Naive thymus-derived CD4-positive, alpha-beta T cell (primary cell): ENCODE measurements at regions of chr9 and their contacts with region 1.

Region 1: GRCh38 chr9:94681508-94681907 is 42.2 kb upstream of the FBP1 start:
- DNase-seq: peak; percentile 20 to 63 (median 52)
- ATAC-seq: peak; percentile 94
- H3K4me3 ChIP-seq: no peak overlapping the region
- H3K4me3 Mint-ChIP-seq: no peak overlapping the region
- H3K27ac ChIP-seq: no peak overlapping the region
- H3K27ac Mint-ChIP-seq: no peak overlapping the region
- H3K4me1 ChIP-seq: no peaks in the 10 kb centered on the region
- H3K4me1 Mint-ChIP-seq: no peaks in the 10 kb centered on the region
- H3K27me3 ChIP-seq: no peaks in the 10 kb centered on the region
- H3K27me3 Mint-ChIP-seq: peaks cover 0 to 47% (median 16%) of the 10 kb centered on the region in 5 donors

Region 2: DNA sequence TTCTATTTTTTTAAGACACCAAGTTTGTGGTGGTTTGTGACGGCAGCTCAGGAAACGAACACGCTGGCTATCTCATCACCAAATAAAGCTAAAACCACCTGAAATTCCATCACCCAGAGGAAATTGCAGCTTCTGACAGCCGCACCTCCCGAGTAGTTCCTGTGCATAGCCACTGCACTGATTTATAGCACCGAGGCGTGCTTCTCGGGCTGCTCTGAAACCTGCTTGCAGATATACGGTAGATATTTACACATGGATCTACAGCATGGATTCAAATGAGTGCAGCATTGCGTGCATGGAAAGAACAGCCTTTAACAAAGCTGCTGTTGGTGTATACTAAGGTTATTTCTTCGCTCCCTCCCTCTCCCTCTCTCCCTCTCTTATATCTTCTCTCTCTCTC is 951.3 kb before region 1 on chr9:
- CTCF ChIA-PET with region 1: no interaction called
- POLR2A ChIA-PET with region 1: no interaction called
- intact Hi-C with region 1: no loop called
- DNase-seq: no peak
- ATAC-seq: no peak
- H3K4me3 ChIP-seq: no peak overlapping the region
- H3K4me3 Mint-ChIP-seq: no peak overlapping the region
- H3K27ac ChIP-seq: no peak overlapping the region
- H3K27ac Mint-ChIP-seq: no peak overlapping the region
- H3K4me1 ChIP-seq: no peaks in the 10 kb centered on the region
- H3K4me1 Mint-ChIP-seq: no peaks in the 10 kb centered on the region
- H3K27me3 ChIP-seq: no peaks in the 10 kb centered on the region
- H3K27me3 Mint-ChIP-seq: peaks cover 3 to 54% (median 48%) of the 10 kb centered on the region in 5 donors

Region 3: DNA sequence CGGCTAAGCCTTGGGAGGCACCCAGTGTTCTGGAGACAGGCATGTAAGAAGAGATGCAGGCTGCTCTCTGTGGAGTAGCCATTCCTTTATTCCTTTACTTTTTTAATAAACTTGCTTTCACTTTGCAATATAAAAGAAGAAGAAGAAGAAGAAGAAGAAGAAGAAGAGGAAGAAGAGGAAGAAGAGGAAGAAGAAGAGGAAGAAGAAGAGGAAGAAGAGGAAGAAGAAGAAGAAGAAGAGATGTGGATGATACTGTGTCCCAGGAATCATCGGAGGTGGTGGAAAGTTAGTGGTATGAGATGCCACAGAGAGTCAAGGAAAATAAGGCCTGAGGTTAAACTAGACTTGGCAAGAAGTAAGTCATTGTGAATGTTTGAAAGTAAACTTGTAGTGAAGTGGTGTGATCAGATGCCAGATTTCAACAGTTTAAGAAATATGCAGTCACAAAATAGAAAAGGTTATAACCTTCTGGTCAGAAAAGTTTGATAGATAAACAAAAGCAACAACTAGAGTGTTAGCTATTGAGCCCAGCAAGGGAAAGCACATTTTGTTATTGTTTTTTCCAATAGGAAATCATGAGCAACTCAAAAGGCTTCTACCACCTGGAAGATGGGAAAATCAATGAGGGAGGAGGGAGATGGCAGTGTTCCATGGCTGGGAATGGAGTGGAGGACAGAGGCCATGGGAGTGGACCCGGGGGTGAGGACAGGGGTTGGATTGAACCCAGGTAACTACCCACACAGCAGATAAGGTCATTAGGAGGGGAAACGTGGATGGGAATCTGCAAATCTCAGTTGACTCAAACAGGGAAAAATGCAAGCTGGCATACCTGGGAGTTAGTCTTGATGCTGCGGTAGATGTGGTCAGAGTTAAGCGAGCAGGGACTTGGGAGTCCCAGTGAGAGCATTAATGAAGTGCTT is 61.8 kb after region 1 on chr9:
- CTCF ChIA-PET with region 1: no interaction called
- POLR2A ChIA-PET with region 1: no interaction called
- intact Hi-C with region 1: no loop called
- DNase-seq: no peak
- ATAC-seq: no peak
- H3K4me3 ChIP-seq: no peak overlapping the region
- H3K4me3 Mint-ChIP-seq: no peak overlapping the region
- H3K27ac ChIP-seq: no peak overlapping the region
- H3K27ac Mint-ChIP-seq: no peak overlapping the region
- H3K4me1 ChIP-seq: no peaks in the 10 kb centered on the region
- H3K4me1 Mint-ChIP-seq: peaks cover 0 to 9% (median 0%) of the 10 kb centered on the region in 7 donors
- H3K27me3 ChIP-seq: no peaks in the 10 kb centered on the region
- H3K27me3 Mint-ChIP-seq: no peaks in the 10 kb centered on the region

Region 4: DNA sequence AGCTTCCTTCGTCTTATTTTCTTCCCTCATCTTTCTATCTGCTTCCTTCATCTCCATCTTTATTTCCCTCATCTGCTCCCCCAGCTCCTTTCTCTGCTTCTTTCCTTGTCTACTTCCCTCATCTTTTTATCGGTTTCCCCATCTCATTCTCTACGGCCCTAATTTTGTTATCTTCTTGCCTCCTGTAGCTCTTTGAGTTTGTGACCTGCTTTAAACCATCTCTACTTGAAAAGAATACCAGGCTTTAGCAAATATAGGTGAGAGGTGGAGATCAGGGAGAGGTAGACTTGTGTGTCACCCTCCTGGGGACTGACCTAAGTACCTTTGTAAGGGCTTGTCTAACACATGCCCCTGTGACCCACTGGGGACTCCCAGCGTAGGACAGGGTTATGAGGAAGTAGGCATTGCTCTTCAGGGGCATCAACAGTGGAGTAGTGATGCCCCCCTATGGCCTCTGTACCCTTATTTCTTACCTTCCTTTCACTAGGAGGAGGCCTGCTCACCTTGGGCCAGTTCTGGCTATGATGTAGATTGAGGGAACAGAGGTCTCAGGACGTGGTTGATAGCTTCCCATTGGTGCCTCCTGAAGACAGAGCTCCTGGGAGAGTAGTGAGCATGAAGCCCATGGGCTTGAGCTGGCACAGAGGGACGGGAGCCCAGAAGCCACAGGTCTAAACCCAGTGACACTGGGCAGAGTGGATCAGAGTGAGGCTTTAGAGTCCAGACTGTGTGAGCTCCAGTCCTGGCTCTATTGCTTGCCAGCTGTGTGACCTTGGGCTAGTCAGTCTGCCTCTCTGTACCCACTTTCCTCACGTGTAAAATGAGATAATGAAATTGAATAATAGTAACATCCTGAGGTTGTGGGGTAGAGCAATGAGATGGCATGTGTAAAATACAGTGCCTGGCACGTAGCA is 236.6 kb after region 1 on chr9:
- CTCF ChIA-PET with region 1: interaction called, 14 read pairs
- POLR2A ChIA-PET with region 1: no interaction called
- intact Hi-C with region 1: no loop called
- DNase-seq: peak in 4 of 9 donors; percentile 13 to 31 (median 20)
- ATAC-seq: peak; percentile 74
- H3K4me3 ChIP-seq: no peak overlapping the region
- H3K4me3 Mint-ChIP-seq: no peak overlapping the region
- H3K27ac ChIP-seq: no peak overlapping the region
- H3K27ac Mint-ChIP-seq: peak overlapping the region in 2 of 9 donors; percentile 36
- H3K4me1 ChIP-seq: no peaks in the 10 kb centered on the region
- H3K4me1 Mint-ChIP-seq: peaks cover 0 to 5% (median 0%) of the 10 kb centered on the region in 7 donors
- H3K27me3 ChIP-seq: no peaks in the 10 kb centered on the region
- H3K27me3 Mint-ChIP-seq: no peaks in the 10 kb centered on the region

Region 5: GRCh38 chr9:95181226-95181818 is 499.8 kb after region 1 on chr9:
- CTCF ChIA-PET with region 1: no interaction called
- POLR2A ChIA-PET with region 1: no interaction called
- intact Hi-C with region 1: loop called in 1 of 2 experiments (anchors 1 kb)
- DNase-seq: peak in 4 of 9 donors; percentile 3 to 15 (median 10)
- ATAC-seq: no peak
- H3K4me3 ChIP-seq: no peak overlapping the region
- H3K4me3 Mint-ChIP-seq: no peak overlapping the region
- H3K27ac ChIP-seq: no peak overlapping the region
- H3K27ac Mint-ChIP-seq: no peak overlapping the region
- H3K4me1 ChIP-seq: no peaks in the 10 kb centered on the region
- H3K4me1 Mint-ChIP-seq: peaks cover 0 to 11% (median 0%) of the 10 kb centered on the region in 7 donors
- H3K27me3 ChIP-seq: no peaks in the 10 kb centered on the region
- H3K27me3 Mint-ChIP-seq: no peaks in the 10 kb centered on the region

Region 6: GRCh38 chr9:95268681-95269080 is 587.2 kb after region 1 on chr9:
- CTCF ChIA-PET with region 1: no interaction called
- POLR2A ChIA-PET with region 1: no interaction called
- intact Hi-C with region 1: loop called (anchors 2 to 5 kb)
- DNase-seq: no peak
- ATAC-seq: no peak
- H3K4me3 ChIP-seq: no peak overlapping the region
- H3K4me3 Mint-ChIP-seq: no peak overlapping the region
- H3K27ac ChIP-seq: no peak overlapping the region
- H3K27ac Mint-ChIP-seq: peak overlapping the region in 2 of 9 donors; percentile 12 to 32
- H3K4me1 ChIP-seq: peaks cover 0 to 4% of the 10 kb centered on the region in 2 donors
- H3K4me1 Mint-ChIP-seq: peaks cover 9 to 49% (median 27%) of the 10 kb centered on the region in 7 donors
- H3K27me3 ChIP-seq: no peaks in the 10 kb centered on the region
- H3K27me3 Mint-ChIP-seq: no peaks in the 10 kb centered on the region